Cardiac septum (tissue), 1 donor: ENCODE measurements at regions of chr4 and their contacts with region 1.

Region 1: GRCh38 chr4:107824353-107825071 is at the start of gene SGMS2:
- DNase-seq: peak; percentile 95
- total RNA-seq, gene SGMS2: 37.8 TPM

Region 2: DNA sequence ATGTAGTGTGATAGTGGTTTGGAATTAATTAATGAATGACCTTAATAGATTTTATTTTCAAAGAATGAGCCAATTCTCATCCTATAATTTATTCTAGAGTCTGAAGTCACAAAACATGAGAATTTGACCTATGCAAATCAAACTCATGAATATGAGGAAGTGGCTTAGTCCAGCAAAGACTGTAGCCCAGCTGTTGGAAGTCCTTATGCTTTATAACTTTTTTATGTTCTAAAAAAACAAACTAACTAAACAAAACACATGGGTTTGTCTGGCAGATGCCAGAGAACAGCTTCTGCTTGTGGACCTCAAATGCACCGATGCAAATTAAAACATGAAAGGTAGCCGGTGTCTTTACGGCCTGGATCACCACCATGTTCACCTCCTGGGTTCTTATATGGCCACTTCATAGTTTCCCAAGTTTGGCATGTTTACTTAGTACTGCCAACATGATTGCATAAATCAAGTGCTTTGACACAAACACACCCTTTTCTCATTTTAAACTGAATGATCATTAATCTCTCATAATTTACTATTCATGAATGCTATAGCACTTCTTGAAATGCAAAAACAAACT is 381.9 kb before region 1 on chr4:
- intact Hi-C with region 1: no loop called
- DNase-seq: no peak

Region 3: GRCh38 chr4:107579099-107579498 is 245.4 kb before region 1 on chr4:
- intact Hi-C with region 1: no loop called
- DNase-seq: no peak

Region 4: GRCh38 chr4:107719922-107720722 is 104.4 kb before region 1 on chr4 and contains the start of gene PAPSS1:
- intact Hi-C with region 1: loop called (anchors 10 kb)
- DNase-seq: peak; percentile 98
- total RNA-seq, gene PAPSS1: 13.8 TPM

Region 5: DNA sequence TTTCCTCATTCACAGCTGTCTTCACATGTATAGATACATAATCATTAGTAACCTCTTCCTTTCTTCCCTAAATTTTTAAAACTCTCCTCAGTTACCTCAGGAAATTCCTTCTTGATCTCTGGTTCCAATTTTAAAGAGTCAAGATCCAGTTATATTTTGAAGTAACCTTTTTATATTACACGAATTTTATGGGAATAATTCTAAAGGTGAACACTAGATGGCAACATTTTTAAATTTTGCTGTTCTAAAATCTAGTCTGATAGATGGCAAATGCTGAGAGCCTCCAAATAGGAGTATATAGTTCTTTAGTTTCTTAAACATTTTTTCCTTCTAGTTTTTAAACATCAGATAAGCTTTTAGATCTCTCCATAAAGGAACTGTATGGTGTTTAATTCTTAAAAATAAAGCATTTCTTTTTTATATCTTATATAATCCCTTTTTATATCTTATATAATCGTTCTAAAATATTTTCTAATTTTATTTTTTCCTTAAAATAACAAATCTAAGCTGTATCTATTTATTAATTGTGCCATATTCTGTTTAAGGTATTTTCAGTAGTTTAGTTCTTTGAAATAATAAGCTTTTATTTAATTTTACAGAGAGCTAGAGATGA is 66.5 kb before region 1 on chr4:
- intact Hi-C with region 1: loop called (anchors 10 kb)
- DNase-seq: no peak

Region 6: DNA sequence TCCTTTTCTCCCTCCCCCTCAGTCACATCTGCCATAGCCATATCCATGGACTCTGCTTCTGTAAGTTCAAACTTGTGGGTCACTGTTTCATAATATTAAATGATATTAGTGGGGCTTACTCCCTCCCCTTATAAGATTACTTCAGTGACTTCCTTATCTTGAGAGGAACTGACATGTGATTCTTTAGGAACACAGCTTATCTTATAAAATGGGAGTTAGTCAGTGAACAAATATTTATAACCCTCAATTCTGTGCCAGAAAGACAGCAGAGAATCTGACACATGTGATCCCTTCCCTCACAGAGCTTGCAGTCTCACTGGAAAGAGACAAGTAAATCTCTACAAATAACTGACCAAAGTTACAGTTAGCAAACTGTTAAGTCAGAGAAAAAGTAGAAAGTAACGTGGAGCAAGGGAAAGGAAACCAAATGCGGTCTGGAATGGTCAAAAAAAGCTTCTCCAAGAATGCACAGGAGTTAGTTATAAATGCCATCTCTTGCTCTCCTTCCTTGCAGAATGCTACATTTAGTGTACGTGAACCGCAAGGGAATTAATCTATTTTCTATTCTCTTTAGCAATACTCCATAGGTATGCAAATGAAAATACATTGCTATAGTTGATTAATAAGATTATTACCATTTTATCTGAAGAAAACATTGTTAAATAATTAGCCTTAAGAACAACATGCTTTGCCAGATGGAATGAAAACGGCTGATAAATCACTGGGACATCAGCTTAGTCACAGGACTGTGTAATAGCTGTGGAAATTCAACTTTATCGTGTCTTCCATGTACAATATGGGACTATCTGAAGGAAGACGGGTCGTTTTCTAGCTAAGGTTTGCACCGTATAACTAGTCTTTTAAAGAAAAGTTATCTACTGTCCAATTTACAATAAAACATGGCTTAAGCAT is 29.2 kb after region 1 on chr4:
- intact Hi-C with region 1: loop called (anchors 1 kb)
- DNase-seq: no peak

Region 7: DNA sequence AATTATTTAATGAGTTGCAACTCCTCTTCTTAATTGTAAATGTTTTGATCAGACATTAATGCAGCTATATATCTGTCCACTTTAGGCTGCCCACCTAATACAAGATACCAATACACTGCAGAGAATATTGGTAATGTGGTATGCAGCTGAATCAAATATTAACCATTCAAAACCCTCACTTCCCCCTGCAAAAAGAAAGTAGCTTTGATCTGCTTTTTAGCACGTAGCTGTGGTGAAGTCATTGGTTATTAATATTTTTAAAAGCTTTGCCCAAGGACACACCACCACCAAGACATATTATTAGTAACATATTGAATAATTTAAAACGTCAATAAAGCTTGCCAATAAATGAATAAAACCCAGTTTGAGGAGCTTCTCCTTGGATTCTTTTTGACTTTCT is 78.2 kb after region 1 on chr4:
- intact Hi-C with region 1: loop called (anchors 5 kb)
- DNase-seq: no peak

Region 8: DNA sequence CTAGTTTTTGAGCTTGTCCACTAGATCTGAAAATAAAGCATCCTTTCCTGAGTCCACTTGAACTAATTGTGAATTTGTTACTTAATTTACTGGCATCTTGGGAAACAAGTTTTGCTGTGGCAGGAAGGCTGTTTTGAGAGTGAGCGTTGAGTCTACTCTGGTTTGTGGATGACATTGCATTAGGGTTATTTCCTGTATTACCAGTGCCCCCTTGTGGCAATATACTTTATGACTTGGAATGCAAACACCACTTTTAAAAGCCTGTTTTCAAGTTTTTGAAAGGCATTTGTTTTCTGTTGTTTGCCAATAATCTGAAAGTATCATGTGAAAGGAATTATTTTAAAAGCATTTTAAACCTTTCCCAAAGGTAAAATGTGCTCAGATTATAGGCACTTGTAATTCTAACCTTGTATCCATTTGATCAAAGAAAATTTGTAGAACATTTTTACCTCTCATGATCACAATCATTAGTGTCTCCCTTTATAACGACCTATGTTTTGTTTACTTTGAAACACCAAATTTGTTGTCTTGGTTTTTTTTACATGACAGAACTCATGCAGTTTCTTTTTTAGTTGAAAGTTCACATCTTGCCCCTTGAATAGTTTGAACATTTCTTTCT is 88.9 kb after region 1 on chr4:
- intact Hi-C with region 1: loop called (anchors 2 kb)
- DNase-seq: no peak